Right cardiac atrium (tissue), 5 donors: ENCODE measurements at regions of chr16 and their contacts with region 1.

Region 1: DNA sequence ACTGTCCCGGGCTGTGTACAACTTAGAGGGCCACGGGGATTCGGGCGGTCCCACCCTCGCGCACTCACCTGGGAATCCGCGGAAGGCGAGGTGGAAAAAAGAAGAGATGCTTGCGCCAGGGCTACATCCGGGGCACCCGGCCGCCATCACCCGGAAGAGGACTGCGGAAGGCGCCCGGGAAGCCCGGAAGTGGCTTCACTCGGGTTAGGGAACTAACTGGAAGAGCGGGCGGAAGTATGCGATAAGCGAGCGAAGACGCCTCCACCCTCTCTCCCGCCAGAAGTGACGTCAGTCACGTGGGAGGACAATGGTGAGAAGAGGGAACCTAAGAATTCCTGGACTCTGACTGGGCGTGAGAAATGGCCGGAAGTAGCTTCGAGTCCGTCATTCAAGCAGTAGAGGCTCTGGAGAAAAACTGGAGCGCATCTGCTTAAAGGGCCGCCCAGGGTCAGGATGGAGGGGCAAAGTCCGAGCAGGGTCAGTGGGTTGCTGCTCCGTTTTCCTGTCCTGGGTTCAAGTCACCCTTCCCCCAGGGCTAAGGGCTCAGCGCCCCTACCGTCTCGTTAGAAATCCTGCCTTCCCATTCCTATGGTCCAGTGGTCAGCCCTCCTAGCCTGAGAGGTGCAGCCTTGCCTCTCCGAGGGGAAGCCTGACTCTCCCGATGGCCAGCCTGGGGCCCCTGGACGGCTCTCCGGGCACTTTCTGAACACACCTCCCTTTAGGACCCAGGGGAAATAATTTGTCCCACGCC is at the start of gene CD2BP2:
- DNase-seq: peak; percentile 98
- ATAC-seq: peak; percentile 91 to 92
- H3K4me3 ChIP-seq: peak within 1 kb of the TSS; percentile 84
- H3K27ac ChIP-seq: peak within 1 kb of the TSS; percentile 98
- H3K4me1 ChIP-seq: peaks cover 16% of the 10 kb centered on the region
- H3K27me3 ChIP-seq: no peaks in the 10 kb centered on the region
- total RNA-seq, gene CD2BP2: 43.0 to 50.9 (median 45.1) TPM

Region 2: GRCh38 chr16:30382111-30382881 is 27.0 kb after region 1 on chr16 and contains the start of gene SEPTIN1:
- intact Hi-C with region 1: no loop called
- DNase-seq: peak in 1 of 3 donors; percentile 63
- ATAC-seq: no peak
- H3K4me3 ChIP-seq: no peak within 1 kb of the TSS
- H3K27ac ChIP-seq: no peak within 1 kb of the TSS
- H3K4me1 ChIP-seq: peaks cover 2% of the 10 kb centered on the region
- H3K27me3 ChIP-seq: no peaks in the 10 kb centered on the region
- total RNA-seq, gene SEPTIN1: 1.1 to 3.6 (median 2.7) TPM

Region 3: DNA sequence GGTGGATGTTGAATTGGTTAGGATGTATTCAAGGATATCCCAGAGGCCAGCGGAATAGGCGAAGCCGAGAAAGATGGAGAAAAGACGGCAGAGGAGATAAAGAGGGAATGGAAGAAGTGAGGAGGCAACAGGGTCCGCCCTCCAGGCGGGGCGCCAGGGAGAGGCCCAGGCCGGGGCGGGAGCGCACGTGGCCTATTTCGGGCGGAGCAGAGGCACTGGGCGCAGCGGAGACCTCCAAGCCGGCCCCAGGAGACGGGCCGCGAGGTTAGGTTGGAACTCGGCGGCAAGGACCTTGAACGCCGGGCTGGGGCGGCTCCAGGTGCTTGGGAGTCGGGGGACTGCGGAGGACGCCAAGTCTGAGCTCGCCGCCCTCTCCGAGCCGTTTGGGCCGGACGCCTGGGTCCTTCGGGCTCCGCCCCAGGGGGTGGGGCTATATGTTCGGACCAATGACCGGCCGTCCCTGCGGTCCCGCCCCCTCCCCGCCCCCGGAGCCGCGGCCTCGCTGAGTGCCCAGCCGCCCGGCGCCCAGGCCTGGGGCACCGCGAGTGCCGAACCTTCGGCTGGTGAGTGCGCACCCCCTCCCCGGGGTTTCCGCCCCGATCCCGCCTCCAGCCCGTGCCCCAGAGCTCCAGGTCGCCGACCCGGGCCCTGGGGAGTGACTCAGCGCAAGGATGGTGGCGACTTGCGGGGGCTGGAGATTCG is 51.9 kb after region 1 on chr16 and contains the start of gene ZNF771:
- intact Hi-C with region 1: loop called in 1 of 4 experiments (anchors 10 kb)
- DNase-seq: peak; percentile 95 to 99 (median 98)
- ATAC-seq: peak; percentile 97 to 98
- H3K4me3 ChIP-seq: peak within 1 kb of the TSS; percentile 72
- H3K27ac ChIP-seq: peak within 1 kb of the TSS; percentile 84
- H3K4me1 ChIP-seq: peaks cover 4% of the 10 kb centered on the region
- H3K27me3 ChIP-seq: no peaks in the 10 kb centered on the region
- total RNA-seq, gene ZNF771: 4.4 to 11.9 (median 7.0) TPM